ENCODE measurements at regions of chr9 and their contacts with region 1.

Region 1: GRCh38 chr9:127463911-127464310 is 12.6 kb downstream of the LRSAM1 start:
- DNase-seq: no peak
- H3K27ac ChIP-seq: 0 out of 2 replicates have a peak overlapping the region, but pooled peaks have one; percentile 0
- CTCF ChIP-seq: no peak

Region 2: GRCh38 chr9:127418037-127418471 is 45.9 kb before region 1 on chr9:
- CTCF ChIA-PET with region 1: interaction called, 10 read pairs
- POLR2A ChIA-PET with region 1: no interaction called
- DNase-seq: no peak
- H3K27ac ChIP-seq: peak overlapping the region; percentile 73
- CTCF ChIP-seq: no peak

Measured in RWPE1 (cell line).